Heart right ventricle (tissue), 16 donors: ENCODE measurements at regions of chr13 and their contacts with region 1.

Region 1: GRCh38 chr13:19362946-19363510 is 181.4 kb upstream of the TUBA3C start:
- DNase-seq: no peak
- ATAC-seq: no peak
- H3K4me3 ChIP-seq: no peak overlapping the region
- H3K27ac ChIP-seq: no peak overlapping the region
- H3K4me1 ChIP-seq: no peaks in the 10 kb centered on the region
- H3K27me3 ChIP-seq: no peaks in the 10 kb centered on the region
- CTCF ChIP-seq: no peak

Region 2: DNA sequence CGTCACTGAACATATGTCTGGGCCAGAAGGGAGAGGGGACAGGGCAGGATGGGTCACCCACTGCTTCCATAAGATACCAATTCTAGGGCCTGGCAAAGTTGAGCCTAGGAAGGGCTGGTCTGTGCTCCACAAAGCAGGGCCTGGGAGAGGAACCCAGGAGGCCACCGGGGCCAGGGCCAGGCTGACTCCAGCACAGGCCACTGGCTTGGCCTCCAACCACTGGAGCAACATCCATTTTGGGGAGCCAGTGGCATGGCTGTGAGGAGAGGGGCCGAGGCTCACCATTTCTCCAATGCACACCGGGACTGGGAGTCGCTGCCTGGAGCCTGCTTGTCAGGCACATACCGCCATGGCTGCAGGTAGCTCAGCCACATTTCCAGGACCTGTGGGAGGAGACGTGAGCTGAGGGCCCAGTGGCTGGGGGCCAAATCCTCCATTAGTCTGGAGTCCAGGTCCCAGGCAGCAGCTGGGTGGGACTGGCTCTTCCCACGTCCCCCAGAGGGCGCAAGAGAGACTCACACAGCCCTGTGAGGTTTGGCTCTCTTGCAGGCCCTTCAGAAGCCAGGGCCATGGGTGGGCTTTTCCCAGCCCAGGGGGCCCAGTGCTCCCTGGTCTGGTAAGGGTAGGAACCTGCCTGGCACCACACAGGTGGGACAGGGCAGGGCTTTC is 209.1 kb before region 1 on chr13:
- intact Hi-C with region 1: no loop called
- DNase-seq: no peak
- ATAC-seq: no peak
- H3K4me3 ChIP-seq: no peak overlapping the region
- H3K27ac ChIP-seq: no peak overlapping the region
- H3K4me1 ChIP-seq: peaks cover 0 to 19% (median 9%) of the 10 kb centered on the region in 9 donors
- H3K27me3 ChIP-seq: no peaks in the 10 kb centered on the region
- CTCF ChIP-seq: peak in 4 of 9 donors; percentile 20 to 32 (median 26)

Region 3: DNA sequence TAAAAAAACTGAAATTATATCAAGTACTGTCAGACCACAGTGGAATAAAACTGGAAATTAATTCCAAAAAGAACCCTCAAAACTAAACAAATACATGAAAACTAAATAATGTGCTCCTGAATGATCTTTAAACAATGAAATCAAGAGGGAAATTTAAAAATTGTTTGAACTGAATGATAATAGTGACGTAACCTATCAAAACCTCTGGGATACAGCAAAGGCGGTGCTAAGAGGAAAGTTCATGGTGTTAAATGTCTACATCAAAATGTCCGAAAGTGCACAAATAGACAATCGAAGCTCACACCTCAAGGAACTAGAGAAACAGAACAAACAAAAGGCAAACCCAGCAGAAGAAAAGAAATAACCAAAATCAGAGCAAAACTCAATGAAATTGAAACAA is 110.6 kb before region 1 on chr13:
- intact Hi-C with region 1: no loop called
- DNase-seq: no peak
- ATAC-seq: no peak
- H3K4me3 ChIP-seq: no peak overlapping the region
- H3K27ac ChIP-seq: no peak overlapping the region
- H3K4me1 ChIP-seq: no peaks in the 10 kb centered on the region
- H3K27me3 ChIP-seq: no peaks in the 10 kb centered on the region
- CTCF ChIP-seq: no peak

Region 4: GRCh38 chr13:19910336-19911072 is 547.5 kb after region 1 on chr13:
- intact Hi-C with region 1: loop called in 1 of 10 experiments (anchors 10 kb)
- DNase-seq: no peak
- ATAC-seq: no peak
- H3K4me3 ChIP-seq: no peak overlapping the region
- H3K27ac ChIP-seq: no peak overlapping the region
- H3K4me1 ChIP-seq: no peaks in the 10 kb centered on the region
- H3K27me3 ChIP-seq: no peaks in the 10 kb centered on the region
- CTCF ChIP-seq: no peak